Activated T-helper 2 cell treated with anti-CD3 and anti-CD28 coated beads, Interferon-gamma antibody, Interleukin-2, Interleukin-4, amounts not matched to agents 10 μg/mL and 5 μg/mL and 100 μg/mL, durations not matched to agents 14 hours and 24 hours and 36 hours (primary cell): ENCODE measurements at regions of chr7 and their contacts with region 1.

Region 1: GRCh38 chr7:16982640-16983350 is 101.0 kb upstream of the AGR3 start:
- DNase-seq: no peak
- H3K4me3 Mint-ChIP-seq: peak overlapping the region; percentile 51
- H3K27ac Mint-ChIP-seq: no peak overlapping the region
- H3K4me1 Mint-ChIP-seq: peaks cover 17% of the 10 kb centered on the region
- H3K27me3 Mint-ChIP-seq: peaks cover 49% of the 10 kb centered on the region

Region 2: DNA sequence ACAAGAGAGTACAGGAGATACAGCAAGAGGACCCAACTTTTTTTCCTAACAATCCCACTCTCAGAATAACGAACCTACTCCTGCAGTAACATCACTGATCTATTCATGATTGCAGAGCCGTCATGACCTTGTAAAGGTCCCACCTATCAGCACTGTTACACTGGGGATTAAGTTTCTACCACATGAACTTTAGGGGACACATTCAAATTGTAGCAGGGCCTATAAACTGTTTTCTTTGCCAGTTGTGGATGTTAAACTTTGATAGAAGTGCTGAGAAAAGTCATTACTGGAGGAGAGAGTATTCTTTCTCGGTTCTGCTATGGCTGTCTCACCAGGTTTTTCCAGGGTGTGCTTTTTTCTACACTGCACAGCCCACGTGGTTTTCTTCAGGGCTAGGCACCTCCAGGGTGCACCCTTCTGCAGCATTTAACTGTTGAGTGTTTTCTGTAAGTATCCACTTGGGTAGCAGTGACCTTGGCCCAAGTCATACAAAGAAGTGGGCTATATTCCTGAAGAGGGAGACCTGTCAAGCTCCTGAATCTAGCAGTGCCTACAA is 184.1 kb after region 1 on chr7:
- intact Hi-C with region 1: no loop called
- DNase-seq: no peak
- H3K4me3 Mint-ChIP-seq: no peak overlapping the region
- H3K27ac Mint-ChIP-seq: peak overlapping the region; percentile 66
- H3K4me1 Mint-ChIP-seq: peaks cover 35% of the 10 kb centered on the region
- H3K27me3 Mint-ChIP-seq: no peaks in the 10 kb centered on the region

Region 3: GRCh38 chr7:17530741-17531417 is 548.1 kb after region 1 on chr7:
- intact Hi-C with region 1: loop called (anchors 2 kb)
- DNase-seq: no peak
- H3K4me3 Mint-ChIP-seq: no peak overlapping the region
- H3K27ac Mint-ChIP-seq: no peak overlapping the region
- H3K4me1 Mint-ChIP-seq: peaks cover 13% of the 10 kb centered on the region
- H3K27me3 Mint-ChIP-seq: peaks cover 6% of the 10 kb centered on the region

Region 4: GRCh38 chr7:17640730-17641377 is 658.1 kb after region 1 on chr7:
- intact Hi-C with region 1: loop called (anchors 5 kb)
- DNase-seq: no peak
- H3K4me3 Mint-ChIP-seq: no peak overlapping the region
- H3K27ac Mint-ChIP-seq: no peak overlapping the region
- H3K4me1 Mint-ChIP-seq: no peaks in the 10 kb centered on the region
- H3K27me3 Mint-ChIP-seq: peaks cover 15% of the 10 kb centered on the region

Region 5: GRCh38 chr7:17781491-17782215 is 798.9 kb after region 1 on chr7:
- intact Hi-C with region 1: no loop called
- DNase-seq: no peak
- H3K4me3 Mint-ChIP-seq: no peak overlapping the region
- H3K27ac Mint-ChIP-seq: no peak overlapping the region
- H3K4me1 Mint-ChIP-seq: no peaks in the 10 kb centered on the region
- H3K27me3 Mint-ChIP-seq: peaks cover 9% of the 10 kb centered on the region